PC-9 (cell line): ENCODE measurements at regions of chr1 and their contacts with region 1.

Region 1: DNA sequence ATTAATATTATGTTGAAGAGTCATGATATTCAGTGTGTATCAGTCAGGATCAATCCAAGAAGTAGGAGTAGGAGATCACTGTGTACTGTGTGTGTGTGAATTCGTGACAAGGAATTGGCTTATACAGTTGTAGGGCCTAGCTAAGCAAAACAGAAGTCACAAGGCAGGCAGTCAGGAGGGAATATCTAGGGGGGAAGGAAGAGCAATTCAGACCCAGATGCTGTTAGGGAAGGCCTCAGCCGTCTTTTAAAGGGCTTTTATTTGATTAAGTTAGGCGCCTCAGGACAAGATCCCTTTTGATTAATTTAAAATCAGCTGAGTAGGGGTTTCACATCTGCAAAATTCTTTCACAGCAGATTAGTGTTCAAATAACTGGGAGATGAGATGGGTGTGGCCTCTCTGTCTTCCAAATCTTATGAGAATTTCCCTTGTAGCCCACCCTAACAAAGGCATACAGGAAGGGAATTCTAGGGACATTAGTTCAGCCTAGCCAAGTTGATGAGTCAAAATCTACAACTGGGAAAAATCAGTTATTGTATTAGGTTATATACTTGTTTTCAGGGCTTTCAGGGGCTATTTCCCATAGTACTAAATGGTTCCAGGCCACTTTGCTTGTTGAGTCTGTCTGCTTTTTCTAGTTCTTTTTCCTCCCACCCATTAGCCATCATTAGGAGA is 47.4 kb downstream of the ALG6 start:
- DNase-seq: no peak
- H3K4me3 ChIP-seq: no peak overlapping the region
- H3K27ac ChIP-seq: no peak overlapping the region
- H3K4me1 ChIP-seq: no peaks in the 10 kb centered on the region
- H3K27me3 ChIP-seq: no peaks in the 10 kb centered on the region
- CTCF ChIP-seq: no peak

Region 2: GRCh38 chr1:63294803-63295594 is 119.8 kb before region 1 on chr1:
- CTCF ChIA-PET with region 1: no interaction called
- POLR2A ChIA-PET with region 1: interaction called, 16 read pairs
- intact Hi-C with region 1: no loop called
- DNase-seq: no peak
- H3K4me3 ChIP-seq: no peak overlapping the region
- H3K27ac ChIP-seq: no peak overlapping the region
- H3K4me1 ChIP-seq: no peaks in the 10 kb centered on the region
- H3K27me3 ChIP-seq: peaks cover 32% of the 10 kb centered on the region
- CTCF ChIP-seq: no peak

Region 3: DNA sequence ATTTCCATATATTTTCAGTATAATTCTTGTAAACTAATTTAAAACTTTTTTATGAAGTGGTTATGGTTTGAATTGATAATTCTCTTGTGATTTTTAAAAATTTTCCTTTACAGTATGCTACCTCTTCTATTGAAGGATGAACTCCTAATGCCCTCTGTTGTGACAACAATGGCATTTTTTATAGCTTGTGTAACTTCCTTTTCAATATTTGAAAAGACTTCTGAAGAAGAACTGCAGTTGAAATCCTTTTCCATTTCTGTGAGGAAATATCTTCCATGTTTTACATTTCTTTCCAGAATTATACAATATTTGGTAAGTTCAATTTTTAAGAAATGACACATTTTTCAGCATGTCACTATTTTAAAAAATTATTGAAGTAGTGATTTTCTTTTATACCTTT is 14.0 kb after region 1 on chr1:
- CTCF ChIA-PET with region 1: no interaction called
- POLR2A ChIA-PET with region 1: interaction called, 11 read pairs
- intact Hi-C with region 1: no loop called
- DNase-seq: no peak
- H3K4me3 ChIP-seq: no peak overlapping the region
- H3K27ac ChIP-seq: no peak overlapping the region
- H3K4me1 ChIP-seq: no peaks in the 10 kb centered on the region
- H3K27me3 ChIP-seq: no peaks in the 10 kb centered on the region
- CTCF ChIP-seq: no peak

Region 4: GRCh38 chr1:63461661-63462230 is 46.9 kb after region 1 on chr1:
- CTCF ChIA-PET with region 1: no interaction called
- POLR2A ChIA-PET with region 1: no interaction called
- intact Hi-C with region 1: loop called (anchors 2 kb)
- DNase-seq: no peak
- H3K4me3 ChIP-seq: no peak overlapping the region
- H3K27ac ChIP-seq: no peak overlapping the region
- H3K4me1 ChIP-seq: no peaks in the 10 kb centered on the region
- H3K27me3 ChIP-seq: no peaks in the 10 kb centered on the region
- CTCF ChIP-seq: no peak